CD4-positive, alpha-beta memory T cell (primary cell): ENCODE measurements at regions of chrX and their contacts with region 1.

Region 1: GRCh38 chrX:129957241-129958082 is 25.0 kb upstream of the BCORL1 start:
- DNase-seq: peak in 1 of 5 donors; percentile 47
- H3K4me3 ChIP-seq: peak overlapping the region in 1 of 2 donors; percentile 28
- H3K4me3 Mint-ChIP-seq: peak overlapping the region in 7 of 8 donors; percentile 46 to 70 (median 64)
- H3K27ac ChIP-seq: no peak overlapping the region
- H3K27ac Mint-ChIP-seq: peak overlapping the region in 4 of 7 donors; percentile 50 to 61 (median 57)
- H3K4me1 ChIP-seq: peaks cover 22% of the 10 kb centered on the region
- H3K4me1 Mint-ChIP-seq: peaks cover 14 to 49% (median 26%) of the 10 kb centered on the region in 4 donors
- H3K27me3 ChIP-seq: no peaks in the 10 kb centered on the region
- H3K27me3 Mint-ChIP-seq: peaks cover 2% of the 10 kb centered on the region in 2 donors

Region 2: DNA sequence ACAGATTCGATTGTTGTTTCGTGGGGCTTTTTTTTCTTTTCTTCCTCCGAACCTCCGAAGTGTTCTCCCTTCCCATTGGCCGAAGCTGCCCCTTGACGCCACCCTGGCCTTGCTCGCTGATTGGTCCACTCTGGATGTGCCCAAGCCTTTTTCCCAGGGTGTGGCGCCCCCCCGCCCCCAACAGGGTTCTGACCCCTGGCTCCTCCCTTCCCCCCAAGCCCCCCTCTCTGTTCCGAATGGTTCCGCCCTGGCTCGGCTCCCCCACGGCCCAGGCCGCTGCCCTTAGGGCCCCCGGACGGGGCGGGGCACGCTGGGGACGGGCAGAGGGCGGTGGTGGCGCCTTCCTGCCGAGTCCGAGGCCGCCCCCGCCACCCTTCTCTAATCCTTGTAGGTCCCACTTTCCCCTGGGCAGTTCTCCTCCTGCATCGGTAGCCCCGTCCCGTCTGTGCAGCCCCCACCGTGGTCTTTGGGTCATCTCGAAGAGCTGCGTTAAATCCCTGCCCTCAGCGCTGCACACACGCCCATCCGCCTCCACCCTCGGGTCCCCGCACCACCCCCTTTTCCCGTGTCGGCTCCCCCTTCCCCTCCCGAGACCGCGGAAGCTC is 25.9 kb before region 1 on chrX:
- CTCF ChIA-PET with region 1: interaction called, 12 read pairs
- POLR2A ChIA-PET with region 1: interaction called, 12 read pairs
- intact Hi-C with region 1: loop called (anchors 2 kb)
- DNase-seq: peak; percentile 39 to 71 (median 50)
- H3K4me3 ChIP-seq: peak overlapping the region in 1 of 2 donors; percentile 65
- H3K4me3 Mint-ChIP-seq: peak overlapping the region; percentile 72 to 85 (median 82)
- H3K27ac ChIP-seq: peak overlapping the region; percentile 40
- H3K27ac Mint-ChIP-seq: peak overlapping the region; percentile 80 to 93 (median 90)
- H3K4me1 ChIP-seq: no peaks in the 10 kb centered on the region
- H3K4me1 Mint-ChIP-seq: peaks cover 0 to 5% (median 4%) of the 10 kb centered on the region in 4 donors
- H3K27me3 ChIP-seq: no peaks in the 10 kb centered on the region
- H3K27me3 Mint-ChIP-seq: no peaks in the 10 kb centered on the region

Region 3: DNA sequence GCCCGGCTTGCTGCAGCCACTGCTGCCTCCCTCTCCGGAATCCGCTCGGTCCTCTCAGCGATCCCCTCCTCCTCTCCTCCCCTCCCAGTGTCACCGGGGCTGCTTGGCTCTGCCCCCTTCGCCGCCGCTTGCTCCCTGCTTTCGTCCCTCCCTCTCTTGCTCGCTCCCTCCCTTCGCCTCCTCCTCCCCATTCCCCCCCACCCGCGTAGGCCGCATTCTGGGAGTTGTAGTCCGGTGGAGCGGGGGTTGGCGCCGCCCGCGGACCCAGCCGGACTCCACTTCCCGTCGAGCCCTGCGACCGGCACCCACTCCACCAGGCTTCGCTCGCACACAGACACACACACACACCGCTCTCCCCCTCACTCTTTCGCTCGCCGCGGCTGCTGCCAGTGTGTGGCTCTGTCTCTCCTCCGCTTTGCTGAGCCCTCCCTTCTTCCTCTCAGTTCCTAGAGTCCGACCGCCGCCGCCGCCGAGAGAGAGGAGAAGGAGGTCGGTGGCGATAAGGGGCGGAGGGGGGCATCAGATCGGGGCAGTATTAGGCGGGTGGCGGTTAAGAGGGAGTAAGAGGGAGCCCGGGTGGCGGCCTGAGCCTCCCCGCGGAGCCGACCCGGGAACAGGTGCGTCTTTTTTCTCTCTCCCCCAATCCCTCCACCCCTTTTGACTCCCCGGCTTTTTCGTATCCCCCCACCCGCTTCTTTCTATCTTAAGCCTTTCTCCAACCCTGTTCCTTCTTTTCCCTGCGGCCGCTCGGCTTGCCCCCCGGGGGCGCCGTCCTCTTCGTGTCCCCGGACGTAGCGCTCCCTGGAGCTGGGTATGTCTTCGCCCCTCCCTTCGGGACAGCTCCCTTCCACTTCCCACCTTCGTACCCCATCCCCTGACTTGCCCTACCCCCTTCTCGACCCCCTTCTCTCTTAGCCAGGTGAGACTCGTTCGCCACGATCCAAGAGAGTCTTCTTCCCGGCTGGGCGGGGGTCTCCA is 25.1 kb after region 1 on chrX and contains the start of gene BCORL1:
- CTCF ChIA-PET with region 1: no interaction called
- POLR2A ChIA-PET with region 1: interaction called, 9 read pairs
- intact Hi-C with region 1: loop called (anchors 1 kb)
- DNase-seq: peak; percentile 83 to 93 (median 88)
- H3K4me3 ChIP-seq: peak within 1 kb of the TSS; percentile 29 to 43
- H3K4me3 Mint-ChIP-seq: peak within 1 kb of the TSS in 2 of 8 donors; percentile 86 to 91
- H3K27ac ChIP-seq: no peak within 1 kb of the TSS
- H3K27ac Mint-ChIP-seq: peak within 1 kb of the TSS in 6 of 7 donors; percentile 74 to 90 (median 86)
- H3K4me1 ChIP-seq: peaks cover 7% of the 10 kb centered on the region
- H3K4me1 Mint-ChIP-seq: peaks cover 11 to 37% (median 22%) of the 10 kb centered on the region in 4 donors
- H3K27me3 ChIP-seq: no peaks in the 10 kb centered on the region
- H3K27me3 Mint-ChIP-seq: no peaks in the 10 kb centered on the region
- total RNA-seq, gene BCORL1: 14.0 to 14.2 TPM